Activated CD4-positive, alpha-beta T cell treated with anti-CD3 and anti-CD28 coated beads for 36 hours (primary cell): ENCODE measurements at regions of chr3 and their contacts with region 1.

Region 1: GRCh38 chr3:141386611-141387111 is 18.4 kb downstream of the ZBTB38 start:
- DNase-seq: no peak
- ATAC-seq: peak; percentile 53
- H3K4me3 Mint-ChIP-seq: peak overlapping the region; percentile 20
- H3K27ac Mint-ChIP-seq: no peak overlapping the region
- H3K4me1 Mint-ChIP-seq: peaks cover 13% of the 10 kb centered on the region
- H3K27me3 Mint-ChIP-seq: no peaks in the 10 kb centered on the region

Region 2: DNA sequence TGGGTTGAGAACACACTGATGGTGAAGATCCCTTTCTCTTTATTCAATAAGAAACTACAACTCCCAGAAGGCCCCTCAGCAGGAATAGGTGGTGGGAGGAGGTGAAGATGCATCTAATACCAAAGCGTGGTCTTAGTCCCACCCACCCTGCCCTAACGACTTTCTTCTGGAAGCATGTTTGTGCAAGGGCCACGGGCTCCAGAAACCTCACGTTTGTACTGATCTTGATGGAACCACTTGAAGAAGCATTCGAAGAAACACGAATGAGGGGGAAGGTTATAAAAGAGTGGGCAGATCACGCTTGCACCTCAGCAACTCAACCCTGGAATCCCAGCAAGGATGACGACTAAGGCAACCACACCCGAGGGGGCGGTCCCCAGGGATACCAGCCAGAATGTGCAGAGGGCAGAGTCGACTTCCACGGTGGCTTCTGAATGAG is 455.6 kb before region 1 on chr3:
- CTCF ChIA-PET with region 1: no interaction called
- POLR2A ChIA-PET with region 1: no interaction called
- intact Hi-C with region 1: no loop called
- DNase-seq: no peak
- ATAC-seq: no peak
- H3K4me3 Mint-ChIP-seq: no peak overlapping the region
- H3K27ac Mint-ChIP-seq: no peak overlapping the region
- H3K4me1 Mint-ChIP-seq: peaks cover 2% of the 10 kb centered on the region
- H3K27me3 Mint-ChIP-seq: peaks cover 18% of the 10 kb centered on the region

Region 3: GRCh38 chr3:140980628-140981027 is 406.0 kb before region 1 on chr3:
- CTCF ChIA-PET with region 1: no interaction called
- POLR2A ChIA-PET with region 1: no interaction called
- intact Hi-C with region 1: no loop called
- DNase-seq: no peak
- ATAC-seq: no peak
- H3K4me3 Mint-ChIP-seq: no peak overlapping the region
- H3K27ac Mint-ChIP-seq: no peak overlapping the region
- H3K4me1 Mint-ChIP-seq: no peaks in the 10 kb centered on the region
- H3K27me3 Mint-ChIP-seq: no peaks in the 10 kb centered on the region

Region 4: DNA sequence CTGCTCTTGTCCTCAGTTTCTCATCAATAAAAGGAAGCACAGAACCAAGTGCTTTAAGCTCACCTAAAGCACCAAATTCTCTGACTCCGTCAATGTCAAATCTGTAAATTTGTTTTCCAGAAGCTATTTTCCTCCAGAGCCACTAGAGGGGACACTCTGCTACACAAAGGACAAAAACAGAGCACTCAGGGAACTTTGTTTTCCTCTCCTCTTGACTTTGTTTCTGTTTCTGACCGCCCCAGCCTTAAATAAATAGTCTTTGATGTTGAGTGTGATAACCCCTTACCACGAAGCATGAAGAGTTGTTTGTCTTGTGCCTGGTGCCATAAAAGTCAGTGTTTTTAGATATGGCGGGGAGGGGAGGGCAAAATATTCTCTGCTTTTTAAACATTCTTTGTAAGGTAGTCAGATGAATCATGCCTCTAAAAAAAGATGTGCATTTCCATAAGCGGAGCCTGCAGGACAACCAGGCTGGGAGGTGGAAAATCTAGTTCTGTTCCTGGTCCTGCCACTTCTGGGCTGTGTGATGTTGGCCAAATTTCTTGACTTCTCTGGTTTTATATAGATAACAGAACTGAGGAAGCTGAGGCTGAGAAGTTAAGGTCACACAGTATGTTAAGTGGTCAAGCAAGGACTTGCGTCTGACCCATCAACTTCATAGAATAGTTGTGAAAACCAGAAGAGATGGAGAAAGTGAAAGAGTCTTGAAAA is 25.6 kb before region 1 on chr3:
- CTCF ChIA-PET with region 1: interaction called, 11 read pairs
- POLR2A ChIA-PET with region 1: no interaction called
- intact Hi-C with region 1: no loop called
- DNase-seq: no peak
- ATAC-seq: peak; percentile 87
- H3K4me3 Mint-ChIP-seq: peak overlapping the region; percentile 20
- H3K27ac Mint-ChIP-seq: peak overlapping the region; percentile 55
- H3K4me1 Mint-ChIP-seq: peaks cover 9% of the 10 kb centered on the region
- H3K27me3 Mint-ChIP-seq: no peaks in the 10 kb centered on the region